WTC11 (cell line): ENCODE measurements at regions of chr17 and their contacts with region 1.

Region 1: GRCh38 chr17:42843358-42843934 is 934 bp upstream of the AOC2 start:
- DNase-seq: peak; percentile 46
- ATAC-seq: peak; percentile 74
- H3K4me3 Mint-ChIP-seq: no peak overlapping the region
- H3K27ac Mint-ChIP-seq: no peak overlapping the region
- H3K4me1 Mint-ChIP-seq: no peaks in the 10 kb centered on the region
- H3K27me3 Mint-ChIP-seq: no peaks in the 10 kb centered on the region
- CTCF ChIP-seq: peak; percentile 67

Region 2: DNA sequence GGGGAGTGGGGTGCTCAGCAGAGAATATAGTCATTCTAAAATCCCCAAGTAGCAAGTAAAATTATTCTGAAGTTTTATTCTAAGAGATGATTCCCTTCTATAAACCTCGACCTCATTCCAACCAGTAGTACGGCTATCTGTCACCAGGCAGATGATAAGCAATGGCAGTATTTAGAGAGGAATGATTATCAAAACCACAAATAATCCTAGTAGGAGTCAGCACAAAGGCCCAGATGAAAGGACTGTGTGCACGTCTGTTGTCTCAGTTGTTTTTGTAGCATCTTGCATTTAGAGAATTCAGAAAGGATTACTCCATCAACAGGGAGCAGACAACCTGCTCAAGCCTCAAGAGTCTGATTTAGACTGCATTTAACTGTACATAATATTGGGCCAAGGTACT is 119.8 kb before region 1 on chr17:
- CTCF ChIA-PET with region 1: no interaction called
- POLR2A ChIA-PET with region 1: no interaction called
- DNase-seq: no peak
- ATAC-seq: no peak
- H3K4me3 Mint-ChIP-seq: no peak overlapping the region
- H3K27ac Mint-ChIP-seq: no peak overlapping the region
- H3K4me1 Mint-ChIP-seq: no peaks in the 10 kb centered on the region
- H3K27me3 Mint-ChIP-seq: no peaks in the 10 kb centered on the region
- CTCF ChIP-seq: no peak

Region 3: DNA sequence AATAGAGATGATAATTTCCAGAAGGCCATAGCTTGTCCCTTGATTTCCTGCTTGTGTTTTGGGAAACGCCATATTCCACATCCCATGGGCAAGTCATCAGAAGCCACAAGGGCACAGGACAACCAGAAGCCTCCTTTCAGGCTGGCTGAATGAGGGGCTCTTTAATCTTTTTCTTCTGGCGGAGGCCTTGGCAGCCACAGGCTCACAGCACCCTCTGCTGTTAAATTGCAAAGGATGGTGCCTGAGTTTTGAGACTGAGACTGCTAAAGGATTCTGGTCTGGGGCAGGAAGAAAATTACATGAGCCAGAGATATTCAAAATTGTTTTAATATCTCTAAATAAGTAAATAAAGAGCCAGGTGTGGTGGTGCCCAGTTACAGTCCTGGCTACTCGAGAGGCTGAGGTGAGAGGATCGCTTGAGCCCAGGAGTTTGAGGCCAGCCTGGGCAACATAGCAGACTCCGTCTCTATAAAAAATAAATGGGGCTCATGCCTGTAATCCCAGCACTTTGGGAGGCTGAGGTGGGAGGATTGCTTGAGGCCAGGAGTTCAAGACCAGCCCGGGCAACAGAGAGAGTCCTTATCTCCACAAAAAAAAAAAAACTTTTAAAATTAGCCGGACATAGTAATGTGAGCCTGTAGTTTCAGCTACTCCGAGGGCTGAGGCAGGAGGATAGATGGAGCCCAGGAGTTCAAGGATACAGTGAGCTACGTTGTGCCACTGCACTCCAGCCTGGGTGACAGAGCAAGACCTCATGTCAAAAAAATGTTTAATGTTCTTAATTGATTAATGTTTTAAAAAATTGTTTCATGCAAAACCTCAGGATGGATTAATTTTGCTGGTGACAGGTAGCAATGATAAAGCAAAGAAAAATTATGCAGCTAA is 94.5 kb after region 1 on chr17:
- CTCF ChIA-PET with region 1: interaction called, 14 read pairs
- POLR2A ChIA-PET with region 1: no interaction called
- DNase-seq: peak; percentile 66
- ATAC-seq: peak; percentile 92
- H3K4me3 Mint-ChIP-seq: no peak overlapping the region
- H3K27ac Mint-ChIP-seq: no peak overlapping the region
- H3K4me1 Mint-ChIP-seq: no peaks in the 10 kb centered on the region
- H3K27me3 Mint-ChIP-seq: no peaks in the 10 kb centered on the region
- CTCF ChIP-seq: no peak